BJ (cell line): ENCODE measurements at regions of chr12 and their contacts with region 1.

Region 1: GRCh38 chr12:102883204-102883799 is 33.7 kb downstream of the PAH start:
- DNase-seq: no peak
- H3K4me3 ChIP-seq: no peak overlapping the region
- H3K27me3 ChIP-seq: no peaks in the 10 kb centered on the region; the same call in 1 of the 2 replicates
- CTCF ChIP-seq: peak; percentile 92

Region 2: DNA sequence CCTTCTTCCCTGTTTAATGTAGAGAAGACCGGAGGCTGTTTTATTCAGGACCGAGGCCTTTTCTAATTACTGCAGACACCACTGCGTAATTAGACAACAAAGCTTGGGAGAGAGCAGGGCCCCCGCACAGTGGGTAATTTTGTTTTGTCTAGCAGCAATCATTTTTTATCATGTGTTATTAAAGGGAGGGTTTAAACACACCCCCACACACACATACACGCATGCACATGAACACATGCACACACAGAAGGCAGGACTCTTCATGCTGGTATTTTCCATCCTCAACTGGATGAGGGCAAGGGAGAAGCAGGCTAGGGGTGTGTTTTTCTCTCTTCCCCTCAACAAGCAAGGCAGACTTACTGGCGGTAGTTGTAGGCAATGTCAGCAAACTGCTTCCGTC is 17.1 kb before region 1 on chr12:
- CTCF ChIA-PET with region 1: interaction called, 10 read pairs
- POLR2A ChIA-PET with region 1: no interaction called
- DNase-seq: no peak
- H3K4me3 ChIP-seq: no peak overlapping the region
- H3K27me3 ChIP-seq: no peaks in the 10 kb centered on the region
- CTCF ChIP-seq: no peak

Region 3: GRCh38 chr12:102939670-102940222 is 56.4 kb after region 1 on chr12:
- CTCF ChIA-PET with region 1: interaction called, 16 read pairs
- POLR2A ChIA-PET with region 1: no interaction called
- DNase-seq: no peak
- H3K4me3 ChIP-seq: no peak overlapping the region
- H3K27me3 ChIP-seq: no peaks in the 10 kb centered on the region
- CTCF ChIP-seq: no peak